ENCODE measurements at regions of chr1 and their contacts with region 1.

Region 1: DNA sequence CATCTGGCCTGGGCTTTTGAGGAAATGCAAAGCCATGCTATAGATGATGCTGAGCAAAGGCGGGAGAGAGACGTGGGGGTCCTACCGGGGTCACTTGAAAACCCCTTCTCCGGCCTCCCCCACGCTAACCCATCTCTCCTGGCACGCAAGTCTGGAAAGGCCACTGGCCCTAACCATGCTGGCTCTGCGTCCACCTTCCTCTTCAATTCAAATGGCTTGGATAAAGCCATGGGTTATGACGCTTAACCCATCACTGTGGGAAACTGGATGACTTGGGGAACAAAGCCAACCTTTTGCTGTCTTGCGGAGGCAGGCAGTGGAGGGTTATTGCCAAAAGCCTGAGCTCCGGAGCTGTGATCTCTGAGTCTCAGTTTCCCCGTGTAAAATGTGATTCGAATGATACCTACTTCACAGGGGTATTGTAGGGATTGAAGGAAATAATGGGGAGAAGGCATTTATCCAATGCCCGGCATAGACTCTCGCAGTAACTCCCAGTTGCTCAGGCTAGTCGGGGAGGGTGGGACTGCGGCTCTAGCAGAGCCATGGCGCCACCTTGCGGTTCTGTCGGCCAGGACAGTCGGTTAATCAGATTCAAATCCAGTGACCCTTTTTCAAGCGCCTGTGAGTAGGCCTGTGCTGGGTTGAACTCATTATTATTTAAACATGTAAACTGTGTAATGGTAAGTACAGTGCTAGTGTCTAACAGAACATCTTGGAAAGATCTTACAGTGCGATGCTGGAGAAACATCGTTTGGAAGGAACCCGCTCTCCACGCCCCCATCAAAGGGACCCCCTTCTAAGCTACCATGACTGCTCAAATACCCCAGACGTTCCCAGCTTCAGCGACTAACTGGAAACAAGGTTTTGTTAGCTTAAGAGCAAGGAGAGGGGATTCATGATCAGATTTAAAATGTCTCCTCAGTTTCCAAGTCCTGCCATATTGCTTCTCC is 20.3 kb downstream of the NEK2 start:
- DNase-seq: peak; percentile 66 to 83 (median 71)
- H3K4me3 ChIP-seq: no peak overlapping the region
- H3K4me3 Mint-ChIP-seq: no peak overlapping the region
- H3K27ac ChIP-seq: no peak overlapping the region
- H3K27ac Mint-ChIP-seq: no peak overlapping the region
- H3K4me1 ChIP-seq: no peaks in the 10 kb centered on the region
- H3K4me1 Mint-ChIP-seq: no peaks in the 10 kb centered on the region
- H3K27me3 ChIP-seq: no peaks in the 10 kb centered on the region
- H3K27me3 Mint-ChIP-seq: no peaks in the 10 kb centered on the region

Region 2: GRCh38 chr1:211514030-211514754 is 140.9 kb before region 1 on chr1:
- CTCF ChIA-PET with region 1: interaction called, 12 read pairs
- POLR2A ChIA-PET with region 1: no interaction called
- DNase-seq: peak; percentile 39 to 76 (median 44)
- H3K4me3 ChIP-seq: no peak overlapping the region
- H3K4me3 Mint-ChIP-seq: peak overlapping the region; percentile 55 to 90 (median 73)
- H3K27ac ChIP-seq: no peak overlapping the region
- H3K27ac Mint-ChIP-seq: peak overlapping the region in 2 of 8 donors; percentile 52 to 69
- H3K4me1 ChIP-seq: peaks cover 10% of the 10 kb centered on the region
- H3K4me1 Mint-ChIP-seq: peaks cover 11 to 17% (median 13%) of the 10 kb centered on the region in 3 donors
- H3K27me3 ChIP-seq: no peaks in the 10 kb centered on the region
- H3K27me3 Mint-ChIP-seq: peaks cover 2 to 3% of the 10 kb centered on the region in 2 donors

Region 3: GRCh38 chr1:211578640-211579433 is 76.3 kb before region 1 on chr1 and contains the start of gene SLC30A1:
- CTCF ChIA-PET with region 1: interaction called, 15 read pairs
- POLR2A ChIA-PET with region 1: no interaction called
- DNase-seq: peak; percentile 99 to 100 (median 100)
- H3K4me3 ChIP-seq: peak within 1 kb of the TSS; percentile 90
- H3K4me3 Mint-ChIP-seq: peak within 1 kb of the TSS; percentile 90 to 97 (median 96)
- H3K27ac ChIP-seq: peak within 1 kb of the TSS; percentile 77
- H3K27ac Mint-ChIP-seq: peak within 1 kb of the TSS; percentile 85 to 97 (median 94)
- H3K4me1 ChIP-seq: peaks cover 26% of the 10 kb centered on the region
- H3K4me1 Mint-ChIP-seq: peaks cover 47 to 66% (median 53%) of the 10 kb centered on the region in 3 donors
- H3K27me3 ChIP-seq: no peaks in the 10 kb centered on the region
- H3K27me3 Mint-ChIP-seq: no peaks in the 10 kb centered on the region
- total RNA-seq, gene SLC30A1: 16.5 to 17.1 TPM

Region 4: DNA sequence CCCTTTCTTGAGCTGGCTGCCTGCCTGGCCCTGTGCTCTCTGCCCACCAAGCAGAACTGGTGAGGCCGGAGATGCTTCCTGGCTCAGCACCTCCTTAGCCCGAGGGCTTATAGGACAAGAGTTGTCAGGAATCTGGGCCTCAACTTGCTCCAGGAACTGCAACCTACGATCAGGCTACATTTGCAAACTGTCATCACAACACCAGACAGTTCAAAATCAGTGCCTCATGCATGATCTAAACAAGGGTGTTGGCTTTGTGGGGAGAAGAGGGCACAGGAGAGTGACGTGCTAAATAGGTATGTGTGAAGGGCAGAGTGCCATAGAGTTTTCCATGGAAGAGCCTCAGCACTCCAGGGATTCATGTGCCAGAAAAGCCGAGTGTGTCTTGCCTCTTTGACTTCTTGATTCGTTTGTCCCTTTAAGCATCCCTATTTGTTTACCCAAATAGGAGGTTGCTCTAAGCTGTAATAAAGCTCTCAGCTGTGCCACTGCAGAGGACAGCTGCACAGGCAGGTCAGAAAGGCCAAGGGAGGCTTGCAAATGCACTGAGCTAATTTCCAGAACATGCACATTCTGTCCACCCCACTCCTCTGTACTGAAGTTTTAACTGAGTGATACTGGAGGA is 50.5 kb after region 1 on chr1:
- CTCF ChIA-PET with region 1: no interaction called
- POLR2A ChIA-PET with region 1: no interaction called
- DNase-seq: no peak
- H3K4me3 ChIP-seq: no peak overlapping the region
- H3K4me3 Mint-ChIP-seq: no peak overlapping the region
- H3K27ac ChIP-seq: no peak overlapping the region
- H3K27ac Mint-ChIP-seq: no peak overlapping the region
- H3K4me1 ChIP-seq: no peaks in the 10 kb centered on the region
- H3K4me1 Mint-ChIP-seq: no peaks in the 10 kb centered on the region
- H3K27me3 ChIP-seq: no peaks in the 10 kb centered on the region
- H3K27me3 Mint-ChIP-seq: no peaks in the 10 kb centered on the region

Region 5: GRCh38 chr1:211724687-211725196 is 69.6 kb after region 1 on chr1:
- CTCF ChIA-PET with region 1: no interaction called
- POLR2A ChIA-PET with region 1: no interaction called
- DNase-seq: no peak
- H3K4me3 ChIP-seq: no peak overlapping the region
- H3K4me3 Mint-ChIP-seq: no peak overlapping the region
- H3K27ac ChIP-seq: no peak overlapping the region
- H3K27ac Mint-ChIP-seq: no peak overlapping the region
- H3K4me1 ChIP-seq: no peaks in the 10 kb centered on the region
- H3K4me1 Mint-ChIP-seq: no peaks in the 10 kb centered on the region
- H3K27me3 ChIP-seq: no peaks in the 10 kb centered on the region
- H3K27me3 Mint-ChIP-seq: peaks cover 0 to 8% of the 10 kb centered on the region in 2 donors

Measured in CD8-positive, alpha-beta memory T cell (primary cell).